AG04449 (cell line): ENCODE measurements at regions of chr11 and their contacts with region 1.

Region 1: GRCh38 chr11:79493555-79494171 is 52.8 kb upstream of the TENM4 start:
- DNase-seq: no peak
- H3K4me3 ChIP-seq: no peak overlapping the region
- CTCF ChIP-seq: peak; percentile 96

Region 2: DNA sequence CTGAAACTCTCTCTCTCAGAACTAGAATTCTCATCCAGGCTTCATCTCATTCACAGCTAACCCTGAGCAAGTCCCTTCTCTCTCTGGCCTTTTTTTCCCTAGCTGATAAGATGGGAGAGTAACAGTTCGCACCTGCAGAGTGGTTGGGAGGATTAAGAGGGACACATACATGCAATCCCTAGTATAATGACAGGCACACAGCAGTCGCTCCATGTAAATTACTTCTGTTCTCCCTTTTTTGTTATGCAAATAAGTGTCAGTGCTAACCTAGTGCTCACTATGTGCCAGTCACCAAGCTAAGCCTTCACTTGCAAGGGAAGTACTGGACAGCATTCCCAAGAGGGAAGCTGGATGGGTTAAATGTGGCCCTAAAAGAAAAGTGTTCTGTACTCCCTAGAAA is 116.3 kb before region 1 on chr11:
- CTCF ChIA-PET with region 1: no interaction called
- POLR2A ChIA-PET with region 1: no interaction called
- DNase-seq: no peak
- H3K4me3 ChIP-seq: no peak overlapping the region
- CTCF ChIP-seq: no peak

Region 3: DNA sequence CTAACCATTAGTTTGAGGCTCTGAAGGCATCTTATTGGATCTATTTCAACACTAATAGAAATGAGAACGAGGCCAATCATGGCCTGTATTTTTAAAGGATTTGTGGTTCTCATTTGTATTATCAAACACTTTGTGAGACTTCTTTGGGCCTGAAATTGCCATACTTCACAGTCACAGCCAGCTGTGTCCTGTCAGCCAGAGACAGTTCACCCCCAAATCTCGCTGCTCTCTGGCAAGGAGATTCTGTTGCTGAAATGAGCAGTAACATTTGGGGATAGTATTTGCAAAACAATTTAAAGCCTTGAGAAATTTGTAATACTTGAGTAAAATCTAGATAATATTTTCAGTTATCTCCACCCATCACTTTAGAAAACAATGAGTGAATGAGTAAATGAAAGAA is 25.9 kb before region 1 on chr11:
- CTCF ChIA-PET with region 1: interaction called, 14 read pairs
- POLR2A ChIA-PET with region 1: no interaction called
- DNase-seq: no peak
- H3K4me3 ChIP-seq: no peak overlapping the region
- CTCF ChIP-seq: no peak

Region 4: DNA sequence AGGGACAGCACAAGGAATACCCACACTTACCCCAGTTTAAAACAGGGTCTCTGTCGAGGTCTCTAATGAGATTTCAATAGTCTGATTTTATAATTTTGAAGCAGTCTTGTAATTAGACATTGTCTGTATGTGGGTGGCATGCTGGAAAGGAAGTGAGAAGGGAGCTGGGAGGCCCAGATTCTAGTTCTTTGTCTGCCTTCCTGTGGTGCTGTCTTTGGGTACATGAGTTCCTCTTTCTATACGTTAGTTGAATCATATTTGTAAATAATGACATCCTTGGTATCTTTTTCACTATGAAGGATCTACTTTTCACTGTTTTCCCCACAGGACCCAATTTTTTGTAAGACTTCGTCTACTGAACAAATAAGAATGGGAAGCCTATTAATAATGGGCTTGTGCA is 10.9 kb before region 1 on chr11:
- CTCF ChIA-PET with region 1: interaction called, 80 read pairs
- POLR2A ChIA-PET with region 1: no interaction called
- DNase-seq: no peak
- H3K4me3 ChIP-seq: no peak overlapping the region
- CTCF ChIP-seq: no peak

Region 5: GRCh38 chr11:79637219-79637618 is 143.6 kb after region 1 on chr11:
- CTCF ChIA-PET with region 1: no interaction called
- POLR2A ChIA-PET with region 1: no interaction called
- DNase-seq: no peak
- H3K4me3 ChIP-seq: no peak overlapping the region
- CTCF ChIP-seq: no peak

Region 6: DNA sequence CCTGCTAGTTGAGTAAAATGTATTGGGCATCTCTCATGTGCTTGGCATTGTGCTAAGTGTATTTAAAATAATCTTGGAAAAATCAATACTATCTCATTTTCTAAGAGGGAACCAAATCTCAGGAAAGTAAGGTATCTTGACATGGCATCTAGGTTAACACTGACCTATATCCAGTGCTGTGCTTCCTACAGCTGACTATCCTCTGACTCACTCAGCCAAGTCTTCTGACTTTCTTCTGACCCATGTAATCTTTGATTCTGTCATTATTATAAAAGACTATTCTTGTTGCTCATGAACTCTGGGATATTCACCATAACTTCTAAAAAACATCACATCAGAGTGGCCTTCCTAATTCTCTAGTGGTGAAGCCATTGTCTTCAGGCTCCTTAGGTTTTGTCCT is 251.3 kb after region 1 on chr11:
- CTCF ChIA-PET with region 1: no interaction called
- POLR2A ChIA-PET with region 1: no interaction called
- DNase-seq: no peak
- H3K4me3 ChIP-seq: no peak overlapping the region
- CTCF ChIP-seq: no peak